ENCODE measurements at regions of chr3 and their contacts with region 1.

Region 1: DNA sequence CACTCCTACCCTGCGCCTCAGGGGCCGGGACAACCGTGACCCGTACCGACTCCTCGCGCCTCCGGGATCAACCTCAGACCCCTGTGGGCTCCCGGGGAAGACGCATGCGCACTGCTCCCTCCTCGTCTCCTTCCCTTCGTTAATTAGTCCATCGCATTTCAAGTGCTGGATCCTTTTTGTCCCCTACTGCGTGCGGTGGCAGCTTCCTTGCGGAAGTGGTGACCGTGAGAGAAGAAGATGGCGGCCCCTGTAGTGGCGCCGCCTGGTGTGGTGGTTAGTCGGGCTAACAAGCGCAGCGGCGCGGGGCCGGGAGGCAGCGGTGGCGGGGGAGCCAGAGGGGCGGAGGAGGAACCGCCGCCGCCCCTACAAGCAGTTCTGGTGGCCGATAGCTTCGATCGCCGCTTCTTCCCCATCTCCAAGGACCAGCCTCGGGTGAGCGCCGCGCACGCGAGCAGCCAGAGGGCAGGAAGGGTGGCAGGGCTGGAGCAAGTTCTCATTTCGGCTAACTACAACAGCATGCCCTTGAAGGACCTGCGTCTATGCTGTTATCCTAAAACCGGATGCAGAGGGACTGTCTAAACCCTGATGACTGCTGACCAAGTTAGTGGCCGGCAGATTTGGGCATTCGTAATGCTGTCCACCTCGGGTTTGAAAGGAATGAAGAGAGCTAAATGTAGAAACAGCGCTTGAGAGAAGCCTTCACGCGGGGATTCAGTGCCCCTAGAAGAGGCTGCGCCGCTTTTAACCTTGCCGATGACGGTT is at the start of gene EIF2B5:
- DNase-seq: peak; percentile 83
- H3K4me3 Mint-ChIP-seq: peak within 1 kb of the TSS; percentile 92
- H3K27ac Mint-ChIP-seq: peak within 1 kb of the TSS; percentile 85
- H3K4me1 Mint-ChIP-seq: peaks cover 31% of the 10 kb centered on the region
- H3K27me3 Mint-ChIP-seq: no peaks in the 10 kb centered on the region
- total RNA-seq, gene EIF2B5: 75.6 and 75.9 TPM in 2 replicates

Region 2: GRCh38 chr3:183697610-183698317 is 437.6 kb before region 1 on chr3 and contains the start of gene YEATS2:
- intact Hi-C with region 1: loop called (anchors 10 kb)
- DNase-seq: peak; percentile 65
- H3K4me3 Mint-ChIP-seq: peak within 1 kb of the TSS; percentile 88
- H3K27ac Mint-ChIP-seq: peak within 1 kb of the TSS; percentile 94
- H3K4me1 Mint-ChIP-seq: peaks cover 37% of the 10 kb centered on the region
- H3K27me3 Mint-ChIP-seq: no peaks in the 10 kb centered on the region
- total RNA-seq, gene YEATS2: 54.2 and 57.4 TPM in 2 replicates

Region 3: DNA sequence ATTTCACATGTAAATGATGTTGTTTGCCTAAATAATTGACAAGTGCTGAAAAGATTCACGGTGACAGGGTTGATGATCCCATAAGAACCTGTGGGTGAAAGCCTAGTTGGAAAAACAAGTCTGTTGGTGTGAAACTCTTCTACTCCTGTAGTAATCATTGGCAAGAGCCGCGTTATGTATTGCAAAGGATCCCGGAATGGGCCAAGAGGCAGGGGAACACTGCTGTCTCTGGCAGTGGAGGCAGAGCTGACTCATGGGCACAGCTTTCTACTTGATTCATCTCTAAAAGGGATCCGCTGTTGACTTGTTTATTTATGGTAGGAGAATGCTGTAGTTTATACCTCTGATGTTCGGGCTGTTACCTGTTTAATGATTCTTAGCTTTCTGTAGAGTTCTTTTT is 373.0 kb before region 1 on chr3:
- intact Hi-C with region 1: no loop called
- DNase-seq: no peak
- H3K4me3 Mint-ChIP-seq: no peak overlapping the region
- H3K27ac Mint-ChIP-seq: no peak overlapping the region
- H3K4me1 Mint-ChIP-seq: peaks cover 7% of the 10 kb centered on the region
- H3K27me3 Mint-ChIP-seq: no peaks in the 10 kb centered on the region

Region 4: DNA sequence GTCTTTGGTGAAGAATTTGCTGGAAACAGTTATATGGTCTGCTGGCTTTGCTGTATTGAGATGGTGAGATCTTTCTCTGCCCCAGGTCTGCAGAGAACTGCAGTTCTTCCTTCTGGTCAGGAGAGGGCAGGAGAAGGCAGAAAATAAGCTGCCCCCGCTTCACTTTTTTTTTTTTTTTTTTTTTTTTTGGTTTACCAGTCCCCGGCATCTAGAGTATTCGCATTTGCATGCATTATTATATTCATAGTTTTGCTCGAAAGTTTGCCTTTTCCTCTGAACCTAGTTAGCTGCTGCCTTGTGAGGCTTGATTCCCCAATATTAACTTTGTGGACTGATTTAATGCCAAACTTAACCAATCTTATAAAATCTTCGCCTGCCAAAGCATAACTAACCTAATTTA is 240.0 kb before region 1 on chr3:
- intact Hi-C with region 1: loop called (anchors 2 kb)
- DNase-seq: no peak
- H3K4me3 Mint-ChIP-seq: no peak overlapping the region
- H3K27ac Mint-ChIP-seq: no peak overlapping the region
- H3K4me1 Mint-ChIP-seq: peaks cover 6% of the 10 kb centered on the region
- H3K27me3 Mint-ChIP-seq: peaks cover 8% of the 10 kb centered on the region

Region 5: DNA sequence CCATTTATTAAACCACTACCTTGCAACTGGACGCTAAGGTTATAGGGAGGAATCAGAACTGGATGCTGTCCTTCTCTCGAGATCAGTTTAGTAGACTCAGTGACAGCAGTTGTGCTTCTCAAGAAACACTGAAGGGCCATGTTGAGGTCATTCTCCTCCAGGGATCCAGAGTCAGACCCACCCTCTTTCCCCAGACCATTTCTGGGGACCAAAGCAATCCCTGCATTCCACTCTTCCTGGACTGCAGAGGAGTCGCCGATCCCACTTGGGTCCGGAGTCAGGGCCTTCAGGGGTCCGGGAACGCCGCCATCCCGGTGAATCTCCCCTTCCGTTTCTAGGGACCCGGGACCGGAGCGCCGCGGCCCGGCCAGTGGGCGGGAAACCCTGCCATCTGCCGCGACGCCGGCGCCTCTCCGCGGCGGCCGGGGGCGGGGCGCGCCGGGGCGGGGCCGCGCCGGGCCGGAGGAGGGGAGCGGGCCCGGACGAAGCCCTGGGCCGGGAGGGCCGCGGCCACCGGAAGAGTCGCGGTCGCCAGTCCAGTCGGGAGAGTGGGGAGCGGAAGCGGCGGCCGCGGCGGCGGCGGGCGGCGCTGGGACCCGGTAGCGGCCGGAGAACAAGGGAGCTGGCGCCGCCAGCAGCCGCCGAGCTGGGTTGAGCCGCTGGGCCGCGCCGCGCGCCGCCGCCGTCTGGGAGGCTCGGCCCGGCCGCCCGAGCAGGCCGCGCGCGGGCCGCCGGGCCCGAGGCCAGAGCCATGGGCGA is 19.7 kb after region 1 on chr3 and contains the start of gene DVL3:
- intact Hi-C with region 1: loop called (anchors 1 kb)
- DNase-seq: peak; percentile 51
- H3K4me3 Mint-ChIP-seq: peak within 1 kb of the TSS; percentile 95
- H3K27ac Mint-ChIP-seq: peak within 1 kb of the TSS; percentile 88
- H3K4me1 Mint-ChIP-seq: peaks cover 20% of the 10 kb centered on the region
- H3K27me3 Mint-ChIP-seq: peaks cover 5% of the 10 kb centered on the region
- total RNA-seq, gene DVL3: 59.4 and 61.5 TPM in 2 replicates

Region 6: DNA sequence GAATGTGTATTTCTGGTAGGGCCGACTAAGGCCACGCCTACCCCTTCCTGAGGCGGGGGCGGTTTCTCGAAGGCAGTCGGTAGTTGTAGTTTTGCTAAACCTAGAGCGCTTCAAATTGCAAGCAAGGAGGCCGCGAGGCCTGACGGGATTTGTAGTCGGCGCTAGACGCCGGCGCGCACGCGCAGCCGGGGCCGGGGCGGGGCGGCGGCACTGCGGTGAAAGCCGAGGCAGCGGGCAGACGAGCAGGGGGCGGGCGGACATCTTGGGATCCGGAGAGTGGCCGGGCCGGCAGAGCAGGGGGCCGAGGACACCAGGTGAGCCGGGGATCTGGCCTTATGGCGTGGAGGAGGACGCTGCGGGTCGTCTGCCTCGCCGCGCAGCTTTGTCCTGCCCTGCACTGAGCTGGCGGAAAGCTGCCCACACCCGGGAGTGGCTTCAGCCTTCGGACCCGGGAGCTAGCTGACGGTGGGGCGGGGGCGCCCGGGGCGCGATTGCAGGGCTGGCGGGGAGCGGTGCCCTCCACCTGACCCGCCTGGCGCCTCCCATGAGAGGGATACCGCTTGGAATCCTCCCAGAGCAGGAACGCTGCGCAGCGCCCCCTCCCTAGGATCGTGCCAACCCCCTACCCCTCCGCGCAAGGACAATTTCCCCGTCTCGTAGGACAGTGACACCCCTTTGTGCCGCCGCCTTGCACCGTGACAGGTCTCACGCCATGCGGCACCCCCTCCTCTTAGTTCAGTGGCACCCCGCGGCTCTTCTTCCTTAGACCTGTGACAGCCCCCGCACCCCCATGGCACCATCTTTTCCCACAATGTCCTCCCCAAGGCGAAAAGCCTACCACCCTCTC is 39.5 kb after region 1 on chr3 and contains the start of gene AP2M1:
- intact Hi-C with region 1: loop called (anchors 1 kb)
- DNase-seq: peak; percentile 99
- H3K4me3 Mint-ChIP-seq: peak within 1 kb of the TSS; percentile 95
- H3K27ac Mint-ChIP-seq: peak within 1 kb of the TSS; percentile 85
- H3K4me1 Mint-ChIP-seq: peaks cover 28% of the 10 kb centered on the region
- H3K27me3 Mint-ChIP-seq: no peaks in the 10 kb centered on the region
- total RNA-seq, gene AP2M1: 235 and 238 TPM in 2 replicates

Region 7: GRCh38 chr3:184196536-184196935 is 61.2 kb after region 1 on chr3:
- intact Hi-C with region 1: no loop called
- DNase-seq: no peak
- H3K4me3 Mint-ChIP-seq: no peak overlapping the region
- H3K27ac Mint-ChIP-seq: no peak overlapping the region
- H3K4me1 Mint-ChIP-seq: no peaks in the 10 kb centered on the region
- H3K27me3 Mint-ChIP-seq: no peaks in the 10 kb centered on the region

Measured in activated T-helper 1 cell treated with anti-CD3 and anti-CD28 coated beads, Interleukin-12 subunit alpha, Interleukin-12 subunit beta, Interleukin-2, Interleukin-4 antibody, amounts not matched to agents 30 ng/mL and 10 ng/mL and 1 ng/mL, durations not matched to agents 14 hours and 24 hours and 36 hours (primary cell).